K562 (cell line): ENCODE measurements at regions of chr2 and their contacts with region 1.

Region 1: DNA sequence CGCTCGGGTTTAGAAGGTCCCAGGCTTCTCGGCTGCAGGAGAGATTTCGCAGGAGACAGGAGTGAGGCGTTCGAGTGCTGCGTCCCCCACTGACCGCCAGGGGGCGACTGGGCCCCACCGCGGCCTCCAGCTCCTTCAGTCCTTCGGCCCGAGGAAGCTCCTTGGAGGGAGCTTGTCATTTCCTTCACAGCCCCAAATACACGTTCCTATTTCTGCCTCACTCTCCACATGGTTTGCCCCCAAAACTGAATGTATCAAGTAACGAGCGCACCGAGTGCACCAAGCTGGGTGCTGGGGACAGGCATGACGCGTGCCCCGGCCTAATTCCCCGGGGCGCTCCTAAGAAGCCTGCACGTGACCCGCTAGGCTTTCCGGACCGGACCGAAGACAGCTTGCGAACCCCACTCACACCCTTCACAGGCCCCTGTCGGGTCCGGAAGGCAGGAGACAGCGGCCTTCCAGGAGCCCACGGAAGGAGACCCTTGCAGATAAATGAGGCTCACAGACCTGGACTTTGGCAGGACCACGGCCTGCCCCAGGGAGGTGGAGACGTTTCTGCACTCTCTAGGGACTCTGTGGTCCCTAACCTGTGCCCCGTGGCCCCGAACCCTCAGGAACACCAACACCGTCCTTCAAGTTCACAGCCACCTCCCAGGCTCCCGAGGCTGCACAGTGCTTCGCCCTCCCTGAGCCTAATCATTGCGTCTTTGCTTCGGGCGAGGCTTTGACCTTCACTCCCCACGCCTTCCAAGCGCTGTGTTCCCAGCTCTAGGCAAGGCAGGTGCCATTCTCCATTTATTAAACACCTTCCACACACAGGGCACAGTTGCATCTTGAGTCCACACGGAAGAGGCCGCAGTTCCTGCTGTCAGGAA is 13.0 kb upstream of the FAHD2A start:
- DNase-seq: peak; percentile 72 to 85 (median 82)
- ATAC-seq: peak; percentile 96
- H3K4me3 ChIP-seq: no peak overlapping the region
- H3K27ac ChIP-seq: no peak overlapping the region
- H3K4me1 ChIP-seq: peaks cover 0 to 12% of the 10 kb centered on the region in 2 experiments; a peak in 2 of 5 replicates
- H3K27me3 ChIP-seq: peaks cover 15 to 52% of the 10 kb centered on the region in 2 experiments; a peak in 3 of 5 replicates
- CTCF ChIP-seq: peak; percentile 89 to 95 (median 93)
- EP300 ChIP-seq: no peak
- POLR2A ChIP-seq: no peak
- RAD21 ChIP-seq: peak; percentile 49 to 74

Region 2: GRCh38 chr2:95106081-95106480 is 283.4 kb before region 1 on chr2:
- CTCF ChIA-PET with region 1: no interaction called
- POLR2A ChIA-PET with region 1: no interaction called
- in situ Hi-C with region 1: no loop called
- intact Hi-C with region 1: no loop called
- DNase-seq: no peak
- ATAC-seq: no peak
- H3K4me3 ChIP-seq: no peak overlapping the region
- H3K27ac ChIP-seq: no peak overlapping the region
- H3K4me1 ChIP-seq: no peaks in the 10 kb centered on the region
- H3K27me3 ChIP-seq: no peaks in the 10 kb centered on the region
- CTCF ChIP-seq: no peak
- EP300 ChIP-seq: no peak
- POLR2A ChIP-seq: no peak
- RAD21 ChIP-seq: no peak

Region 3: GRCh38 chr2:95231723-95232122 is 157.8 kb before region 1 on chr2:
- CTCF ChIA-PET with region 1: no interaction called
- POLR2A ChIA-PET with region 1: no interaction called
- in situ Hi-C with region 1: no loop called
- intact Hi-C with region 1: no loop called
- DNase-seq: peak; percentile 57 to 75 (median 64)
- ATAC-seq: peak; percentile 86
- H3K4me3 ChIP-seq: no peak overlapping the region
- H3K27ac ChIP-seq: no peak overlapping the region
- H3K4me1 ChIP-seq: no peaks in the 10 kb centered on the region
- H3K27me3 ChIP-seq: peaks cover 0 to 8% of the 10 kb centered on the region in 2 experiments; a peak in 3 of 5 replicates
- CTCF ChIP-seq: peak; percentile 78 to 89 (median 87)
- EP300 ChIP-seq: no peak
- POLR2A ChIP-seq: no peak
- RAD21 ChIP-seq: peak; percentile 41 to 74

Region 4: GRCh38 chr2:95323347-95324185 is 65.9 kb before region 1 on chr2:
- CTCF ChIA-PET with region 1: no interaction called
- POLR2A ChIA-PET with region 1: no interaction called
- in situ Hi-C with region 1: no loop called
- intact Hi-C with region 1: loop called (anchors 2 kb)
- DNase-seq: peak; percentile 49 to 73 (median 66)
- ATAC-seq: peak; percentile 93
- H3K4me3 ChIP-seq: no peak overlapping the region
- H3K27ac ChIP-seq: no peak overlapping the region
- H3K4me1 ChIP-seq: peaks cover 0 to 6% of the 10 kb centered on the region in 2 experiments; a peak in 2 of 5 replicates
- H3K27me3 ChIP-seq: peaks cover 0 to 51% of the 10 kb centered on the region in 2 experiments; a peak in 4 of 5 replicates
- CTCF ChIP-seq: peak; percentile 62 to 70 (median 65)
- EP300 ChIP-seq: no peak
- POLR2A ChIP-seq: no peak
- RAD21 ChIP-seq: peak in 1 of 2 experiments; percentile 47; a peak in 2 of 4 replicates

Region 5: GRCh38 chr2:95728878-95729596 is 339.6 kb after region 1 on chr2:
- CTCF ChIA-PET with region 1: no interaction called
- POLR2A ChIA-PET with region 1: no interaction called
- in situ Hi-C with region 1: no loop called
- intact Hi-C with region 1: loop called (anchors 10 kb)
- DNase-seq: peak; percentile 19 to 58 (median 24)
- ATAC-seq: peak; percentile 91
- H3K4me3 ChIP-seq: no peak overlapping the region
- H3K27ac ChIP-seq: no peak overlapping the region
- H3K4me1 ChIP-seq: no peaks in the 10 kb centered on the region
- H3K27me3 ChIP-seq: no peaks in the 10 kb centered on the region
- CTCF ChIP-seq: peak; percentile 51 to 68 (median 53); a peak in 5 of 6 replicates
- EP300 ChIP-seq: no peak
- POLR2A ChIP-seq: no peak
- RAD21 ChIP-seq: peak; percentile 75 to 80